ENCODE measurements at regions of chr7 and their contacts with region 1.

Region 1: DNA sequence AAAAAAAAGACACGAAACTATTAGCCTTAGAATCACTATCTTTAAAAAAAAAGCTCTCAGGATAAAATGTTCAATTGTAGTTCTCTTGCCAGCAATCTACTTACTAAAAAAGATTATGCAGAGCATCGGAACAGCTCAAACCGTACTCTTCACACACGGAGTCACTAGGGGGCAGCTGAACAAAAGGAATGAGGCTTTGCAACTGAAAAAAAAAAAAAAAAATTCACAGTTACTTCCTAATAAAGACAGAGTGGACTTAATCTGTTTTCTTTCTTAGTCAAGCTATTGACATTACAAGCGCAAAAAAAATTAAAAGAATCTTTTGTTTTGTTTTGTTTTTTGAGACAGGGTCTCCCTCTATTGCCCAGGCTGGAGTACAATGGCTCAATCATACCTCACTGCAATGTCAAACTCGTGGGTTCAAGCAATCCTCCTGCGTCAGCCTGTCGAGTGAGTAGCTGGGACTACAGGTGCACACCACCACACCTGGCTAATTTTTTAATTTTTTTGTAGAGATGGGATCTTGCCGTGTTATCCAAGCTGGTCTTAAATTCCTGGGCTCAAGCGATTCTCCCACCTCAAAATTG is 11.5 kb downstream of the PMS2 start:
- DNase-seq: peak in 4 of 5 donors; percentile 57 to 61 (median 58)
- H3K4me3 ChIP-seq: no peak overlapping the region
- H3K4me3 Mint-ChIP-seq: no peak overlapping the region
- H3K27ac ChIP-seq: no peak overlapping the region
- H3K27ac Mint-ChIP-seq: peak overlapping the region in 1 of 7 donors; percentile 48
- H3K4me1 ChIP-seq: no peaks in the 10 kb centered on the region
- H3K4me1 Mint-ChIP-seq: peaks cover 0 to 1% (median 0%) of the 10 kb centered on the region in 4 donors
- H3K27me3 ChIP-seq: no peaks in the 10 kb centered on the region
- H3K27me3 Mint-ChIP-seq: no peaks in the 10 kb centered on the region

Region 2: GRCh38 chr7:6008668-6009611 is 11.6 kb after region 1 on chr7 and contains the starts of genes AIMP2 and PMS2:
- CTCF ChIA-PET with region 1: interaction called, 16 read pairs
- POLR2A ChIA-PET with region 1: interaction called, 8 read pairs
- intact Hi-C with region 1: no loop called
- DNase-seq: peak; percentile 93 to 97 (median 94)
- H3K4me3 ChIP-seq: peak within 1 kb of the TSS; percentile 70 to 73
- H3K4me3 Mint-ChIP-seq: peak within 1 kb of the TSS; percentile 92 to 97 (median 95)
- H3K27ac ChIP-seq: peak within 1 kb of the TSS; percentile 86
- H3K27ac Mint-ChIP-seq: peak within 1 kb of the TSS; percentile 93 to 98 (median 97)
- H3K4me1 ChIP-seq: peaks cover 21% of the 10 kb centered on the region
- H3K4me1 Mint-ChIP-seq: peaks cover 18 to 37% (median 25%) of the 10 kb centered on the region in 4 donors
- H3K27me3 ChIP-seq: no peaks in the 10 kb centered on the region
- H3K27me3 Mint-ChIP-seq: no peaks in the 10 kb centered on the region
- total RNA-seq, gene AIMP2: 10.7 to 10.8 TPM
- total RNA-seq, gene PMS2: 22.7 to 23.2 TPM

Region 3: DNA sequence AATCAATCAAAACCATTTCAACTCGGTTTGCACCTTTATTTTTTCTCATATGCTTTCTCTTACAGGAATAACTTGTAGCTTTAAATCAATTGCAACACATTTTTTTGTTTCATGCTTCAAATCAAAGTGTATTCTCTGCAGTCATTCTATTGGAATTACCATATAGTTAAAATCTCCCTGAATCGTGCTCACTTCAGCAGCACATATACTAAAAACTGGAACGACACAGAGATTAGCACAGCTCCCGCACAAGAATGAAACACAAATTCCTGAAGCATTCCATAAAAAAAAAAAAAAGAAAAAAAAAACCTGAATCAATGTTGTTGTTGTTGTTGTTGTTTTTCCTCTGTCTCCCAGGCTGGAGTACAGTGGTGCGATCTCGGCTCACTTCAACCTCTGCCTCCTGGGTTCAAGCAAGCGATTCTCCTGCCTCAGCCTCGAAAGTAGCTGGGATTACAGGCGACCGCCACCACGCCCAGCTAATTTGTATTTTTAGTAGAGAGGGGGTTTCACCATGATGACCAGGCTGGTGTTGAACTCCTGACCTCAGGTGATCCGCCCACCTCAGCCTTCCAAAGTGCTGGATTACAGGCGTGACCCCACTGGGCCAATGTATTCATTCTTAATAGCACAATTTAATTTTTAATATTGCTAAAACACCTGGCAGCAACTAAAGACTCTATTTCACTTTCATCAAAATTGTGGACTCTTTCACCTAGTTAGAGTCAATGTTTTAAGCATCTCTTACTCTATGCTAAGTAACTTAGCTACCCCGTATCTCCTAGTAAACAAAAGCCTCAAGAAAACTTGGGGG is 60.2 kb after region 1 on chr7:
- CTCF ChIA-PET with region 1: interaction called, 10 read pairs
- POLR2A ChIA-PET with region 1: no interaction called
- intact Hi-C with region 1: no loop called
- DNase-seq: no peak
- H3K4me3 ChIP-seq: peak overlapping the region; percentile 42 to 90
- H3K4me3 Mint-ChIP-seq: peak overlapping the region; percentile 94 to 100 (median 98)
- H3K27ac ChIP-seq: no peak overlapping the region
- H3K27ac Mint-ChIP-seq: peak overlapping the region in 6 of 7 donors; percentile 10 to 100 (median 95)
- H3K4me1 ChIP-seq: peaks cover 24% of the 10 kb centered on the region
- H3K4me1 Mint-ChIP-seq: peaks cover 16 to 34% (median 26%) of the 10 kb centered on the region in 4 donors
- H3K27me3 ChIP-seq: no peaks in the 10 kb centered on the region
- H3K27me3 Mint-ChIP-seq: no peaks in the 10 kb centered on the region

Region 4: GRCh38 chr7:6106140-6106904 is 109.0 kb after region 1 on chr7:
- CTCF ChIA-PET with region 1: interaction called, 7 read pairs
- POLR2A ChIA-PET with region 1: interaction called, 12 read pairs
- intact Hi-C with region 1: loop called (anchors 1 kb)
- DNase-seq: peak; percentile 41 to 58 (median 52)
- H3K4me3 ChIP-seq: peak overlapping the region; percentile 44 to 67
- H3K4me3 Mint-ChIP-seq: peak overlapping the region; percentile 87 to 98 (median 94)
- H3K27ac ChIP-seq: peak overlapping the region; percentile 86
- H3K27ac Mint-ChIP-seq: peak overlapping the region; percentile 88 to 98 (median 96)
- H3K4me1 ChIP-seq: peaks cover 30% of the 10 kb centered on the region
- H3K4me1 Mint-ChIP-seq: peaks cover 23 to 40% (median 32%) of the 10 kb centered on the region in 4 donors
- H3K27me3 ChIP-seq: no peaks in the 10 kb centered on the region
- H3K27me3 Mint-ChIP-seq: no peaks in the 10 kb centered on the region

Region 5: DNA sequence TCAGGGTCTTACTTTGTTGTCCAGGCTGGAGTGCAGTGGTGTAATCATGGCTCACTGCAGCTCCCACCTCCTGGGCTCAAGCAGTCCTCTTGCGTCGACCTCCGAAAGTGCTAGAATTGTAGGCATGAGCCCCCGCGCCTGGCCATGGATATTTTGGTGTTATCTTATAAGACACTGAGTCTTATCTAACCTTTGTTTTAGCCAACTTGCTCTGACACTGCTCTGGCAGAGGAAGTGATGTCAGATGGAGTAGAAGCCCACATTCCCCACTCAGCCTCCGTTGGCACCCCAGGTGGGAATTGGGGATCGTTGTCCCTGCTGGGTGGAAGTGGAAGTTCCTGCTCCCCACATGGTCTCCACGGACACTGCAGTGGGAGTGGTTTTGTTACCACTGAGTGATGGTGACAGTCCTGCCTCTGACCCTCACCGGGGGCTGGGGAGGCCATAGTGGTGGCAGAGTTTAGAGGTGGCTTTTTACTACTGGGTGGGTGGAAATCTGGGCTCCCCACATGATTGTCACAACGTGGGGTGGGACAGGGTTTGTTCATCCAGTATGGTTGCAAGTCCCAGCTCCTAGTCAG is 132.8 kb after region 1 on chr7:
- CTCF ChIA-PET with region 1: no interaction called
- POLR2A ChIA-PET with region 1: no interaction called
- intact Hi-C with region 1: no loop called
- DNase-seq: no peak
- H3K4me3 ChIP-seq: no peak overlapping the region
- H3K4me3 Mint-ChIP-seq: no peak overlapping the region
- H3K27ac ChIP-seq: no peak overlapping the region
- H3K27ac Mint-ChIP-seq: peak overlapping the region in 2 of 7 donors; percentile 15 to 70
- H3K4me1 ChIP-seq: no peaks in the 10 kb centered on the region
- H3K4me1 Mint-ChIP-seq: peaks cover 7 to 25% (median 14%) of the 10 kb centered on the region in 4 donors
- H3K27me3 ChIP-seq: no peaks in the 10 kb centered on the region
- H3K27me3 Mint-ChIP-seq: no peaks in the 10 kb centered on the region

Region 6: DNA sequence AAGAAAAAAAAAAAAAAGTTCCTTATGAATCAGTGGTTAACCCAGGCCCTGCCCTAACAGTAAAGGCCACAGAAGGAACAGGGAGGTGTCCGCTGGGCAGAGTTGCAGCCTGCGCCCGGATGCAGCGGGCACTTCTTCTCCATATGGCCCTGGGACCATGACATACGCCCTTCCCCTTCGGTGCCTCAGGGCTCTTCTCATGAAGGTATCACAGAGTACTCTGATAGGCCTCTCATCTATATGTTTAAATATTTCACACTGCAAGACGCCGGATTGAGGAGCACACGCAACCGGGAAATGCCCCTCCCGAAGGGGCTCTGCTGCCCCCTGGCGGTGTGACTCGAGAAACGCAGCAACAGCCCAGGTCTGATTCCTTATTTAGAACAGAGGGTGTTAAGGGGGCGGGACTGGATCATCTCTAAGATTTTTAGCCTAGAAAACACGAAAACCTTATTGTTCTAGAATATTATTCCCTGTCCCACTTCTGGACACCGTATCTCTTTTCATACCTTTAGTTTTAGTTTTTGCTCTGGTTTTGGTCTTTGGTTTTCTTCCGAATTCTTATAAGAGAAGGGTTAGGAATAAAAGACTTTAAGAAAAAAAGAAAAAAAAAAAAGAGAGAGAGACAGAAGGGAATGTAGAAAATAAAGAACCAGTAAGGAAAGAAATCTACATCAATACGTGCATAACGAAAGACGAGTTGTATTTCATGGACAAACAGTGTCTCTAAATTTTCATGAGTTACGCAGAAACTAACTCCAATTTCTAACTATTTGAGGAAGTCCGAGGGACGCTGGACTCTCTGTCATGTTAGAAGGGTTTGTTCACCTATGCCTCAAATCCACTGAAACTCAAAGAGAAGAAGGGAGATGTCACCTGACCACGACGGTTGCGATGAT is 438.4 kb after region 1 on chr7:
- CTCF ChIA-PET with region 1: interaction called, 4 read pairs
- POLR2A ChIA-PET with region 1: no interaction called
- intact Hi-C with region 1: loop called (anchors 2 kb)
- DNase-seq: peak; percentile 84 to 87 (median 86)
- H3K4me3 ChIP-seq: peak overlapping the region; percentile 23 to 34
- H3K4me3 Mint-ChIP-seq: peak overlapping the region; percentile 58 to 84 (median 78)
- H3K27ac ChIP-seq: peak overlapping the region; percentile 33
- H3K27ac Mint-ChIP-seq: peak overlapping the region; percentile 65 to 94 (median 83)
- H3K4me1 ChIP-seq: peaks cover 41% of the 10 kb centered on the region
- H3K4me1 Mint-ChIP-seq: peaks cover 22 to 47% (median 35%) of the 10 kb centered on the region in 4 donors
- H3K27me3 ChIP-seq: no peaks in the 10 kb centered on the region
- H3K27me3 Mint-ChIP-seq: no peaks in the 10 kb centered on the region